Activated CD4-positive, alpha-beta T cell treated with anti-CD3 and anti-CD28 coated beads for 36 hours (primary cell): ENCODE measurements at regions of chr2 and their contacts with region 1.

Region 1: GRCh38 chr2:101308432-101309210 is at the start of gene RNF149:
- DNase-seq: peak; percentile 94
- ATAC-seq: peak; percentile 63
- H3K4me3 Mint-ChIP-seq: peak within 1 kb of the TSS; percentile 82
- H3K27ac Mint-ChIP-seq: peak within 1 kb of the TSS; percentile 98
- H3K4me1 Mint-ChIP-seq: peaks cover 67% of the 10 kb centered on the region
- H3K27me3 Mint-ChIP-seq: no peaks in the 10 kb centered on the region
- total RNA-seq, gene RNF149: 23.4 to 29.5 TPM

Region 2: GRCh38 chr2:101001691-101002561 is 306.7 kb before region 1 on chr2 and contains the start of gene RPL31:
- CTCF ChIA-PET with region 1: no interaction called
- POLR2A ChIA-PET with region 1: no interaction called
- intact Hi-C with region 1: loop called in 1 of 2 experiments (anchors 1 kb)
- DNase-seq: peak; percentile 98
- ATAC-seq: peak; percentile 95
- H3K4me3 Mint-ChIP-seq: peak within 1 kb of the TSS; percentile 99
- H3K27ac Mint-ChIP-seq: peak within 1 kb of the TSS; percentile 97
- H3K4me1 Mint-ChIP-seq: peaks cover 41% of the 10 kb centered on the region
- H3K27me3 Mint-ChIP-seq: no peaks in the 10 kb centered on the region
- total RNA-seq, gene RPL31: 889 to 1,817 TPM

Region 3: GRCh38 chr2:101252408-101253012 is 56.1 kb before region 1 on chr2 and contains the start of gene CNOT11:
- CTCF ChIA-PET with region 1: interaction called, 3 read pairs
- POLR2A ChIA-PET with region 1: interaction called, 4 read pairs
- intact Hi-C with region 1: loop called (anchors 1 to 5 kb)
- DNase-seq: peak; percentile 100
- ATAC-seq: peak; percentile 88
- H3K4me3 Mint-ChIP-seq: peak within 1 kb of the TSS; percentile 90
- H3K27ac Mint-ChIP-seq: peak within 1 kb of the TSS; percentile 95
- H3K4me1 Mint-ChIP-seq: peaks cover 42% of the 10 kb centered on the region
- H3K27me3 Mint-ChIP-seq: no peaks in the 10 kb centered on the region
- total RNA-seq, gene CNOT11: 57.9 to 106 TPM

Region 4: GRCh38 chr2:101655702-101656422 is 347.2 kb after region 1 on chr2:
- CTCF ChIA-PET with region 1: no interaction called
- POLR2A ChIA-PET with region 1: no interaction called
- intact Hi-C with region 1: loop called in 1 of 2 experiments (anchors 5 kb)
- DNase-seq: no peak
- ATAC-seq: no peak
- H3K4me3 Mint-ChIP-seq: no peak overlapping the region
- H3K27ac Mint-ChIP-seq: no peak overlapping the region
- H3K4me1 Mint-ChIP-seq: peaks cover 22% of the 10 kb centered on the region
- H3K27me3 Mint-ChIP-seq: no peaks in the 10 kb centered on the region

Region 5: DNA sequence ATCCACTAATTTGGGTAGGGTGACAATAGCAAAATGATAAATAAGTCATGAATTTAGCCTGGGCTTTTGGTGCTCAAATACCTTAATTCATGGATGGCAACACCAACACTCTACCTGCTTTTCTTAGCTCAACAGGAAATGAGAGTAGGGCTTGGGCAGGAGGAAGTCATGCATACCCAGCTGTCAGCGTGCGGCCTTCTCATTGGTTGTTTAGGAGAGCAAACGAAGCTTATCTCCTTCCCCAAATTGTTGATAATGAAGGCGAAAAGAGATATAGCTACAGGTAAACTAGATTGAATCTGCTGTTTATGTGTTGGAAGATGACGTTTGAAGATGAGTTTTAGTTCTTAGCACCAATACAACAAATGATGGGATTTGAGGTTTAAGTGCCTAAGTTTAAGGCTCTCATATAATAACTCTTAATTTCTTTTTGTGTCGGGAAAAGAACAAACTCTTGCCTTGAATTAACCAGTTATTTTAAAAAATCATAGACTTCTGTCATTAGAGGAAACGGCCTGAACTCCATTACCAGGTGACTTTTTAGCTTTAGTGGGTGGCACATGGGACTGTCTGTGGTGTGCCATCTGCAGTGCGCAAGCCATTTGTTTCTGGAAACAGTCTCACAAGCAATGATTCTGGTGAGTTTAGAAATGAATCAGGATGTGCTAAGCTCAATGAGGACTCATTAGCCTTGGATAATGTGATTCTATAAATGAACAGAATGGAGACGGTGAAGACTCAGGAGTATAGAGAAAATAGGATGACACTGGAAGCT is 408.6 kb after region 1 on chr2:
- CTCF ChIA-PET with region 1: no interaction called
- POLR2A ChIA-PET with region 1: no interaction called
- intact Hi-C with region 1: loop called (anchors 2 to 5 kb)
- DNase-seq: peak; percentile 71
- ATAC-seq: peak; percentile 50
- H3K4me3 Mint-ChIP-seq: peak overlapping the region; percentile 9
- H3K27ac Mint-ChIP-seq: peak overlapping the region; percentile 92
- H3K4me1 Mint-ChIP-seq: peaks cover 90% of the 10 kb centered on the region
- H3K27me3 Mint-ChIP-seq: no peaks in the 10 kb centered on the region

Region 6: GRCh38 chr2:102082571-102083392 is 774.2 kb after region 1 on chr2:
- CTCF ChIA-PET with region 1: no interaction called
- POLR2A ChIA-PET with region 1: no interaction called
- intact Hi-C with region 1: loop called in 1 of 2 experiments (anchors 5 kb)
- DNase-seq: peak; percentile 74
- ATAC-seq: peak; percentile 90
- H3K4me3 Mint-ChIP-seq: peak overlapping the region; percentile 50
- H3K27ac Mint-ChIP-seq: peak overlapping the region; percentile 93
- H3K4me1 Mint-ChIP-seq: peaks cover 74% of the 10 kb centered on the region
- H3K27me3 Mint-ChIP-seq: no peaks in the 10 kb centered on the region